ENCODE measurements at regions of chr13 and their contacts with region 1.

Region 1: GRCh38 chr13:44312898-44313551 is 60.6 kb upstream of the SERP2 start:
- DNase-seq: no peak
- ATAC-seq: no peak
- H3K4me3 ChIP-seq: no peak overlapping the region
- H3K27ac ChIP-seq: no peak overlapping the region
- H3K4me1 ChIP-seq: peaks cover 24 to 27% of the 10 kb centered on the region in 2 donors
- H3K27me3 ChIP-seq: no peaks in the 10 kb centered on the region
- CTCF ChIP-seq: no peak
- POLR2A ChIP-seq: no peak

Region 2: DNA sequence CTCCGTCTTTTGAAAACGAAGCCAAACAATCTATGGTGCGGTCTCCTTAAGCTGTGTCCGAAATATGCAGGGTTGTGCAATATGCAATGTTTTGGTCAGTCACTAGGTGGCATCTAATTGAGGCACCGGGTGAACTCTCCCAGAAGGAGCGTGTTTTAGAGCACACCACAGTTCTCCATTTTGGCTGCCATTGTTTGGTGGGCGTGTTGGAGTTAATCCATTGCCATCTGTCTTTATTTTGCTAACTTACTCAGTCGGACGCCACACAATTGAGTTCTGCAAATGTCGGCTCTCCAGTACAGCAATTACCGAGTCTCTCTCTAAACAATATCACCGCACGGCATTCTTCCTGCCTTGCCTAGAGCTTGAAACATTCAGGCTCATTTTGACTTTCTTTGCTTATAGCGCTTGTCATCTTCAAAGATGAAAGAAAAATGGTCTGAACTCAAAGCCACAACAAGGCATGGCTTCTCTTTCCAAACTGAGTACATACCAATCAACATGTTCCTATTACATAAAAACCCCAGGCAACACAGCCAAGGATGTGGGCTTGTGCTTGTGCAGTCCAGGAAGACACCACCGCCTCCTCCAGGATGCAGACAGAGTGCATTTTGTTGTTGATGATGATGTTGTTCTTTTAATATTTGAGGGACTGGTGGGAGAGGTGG is 121.4 kb before region 1 on chr13:
- in situ Hi-C with region 1: no loop called
- intact Hi-C with region 1: loop called (anchors 2 kb)
- DNase-seq: peak; percentile 57 to 68
- ATAC-seq: peak; percentile 98 to 99
- H3K4me3 ChIP-seq: peak overlapping the region; percentile 26 to 44 (median 32)
- H3K27ac ChIP-seq: peak overlapping the region; percentile 52 to 71 (median 56)
- H3K4me1 ChIP-seq: peaks cover 5 to 11% of the 10 kb centered on the region in 2 donors
- H3K27me3 ChIP-seq: no peaks in the 10 kb centered on the region
- CTCF ChIP-seq: peak; percentile 80 to 98 (median 89)
- POLR2A ChIP-seq: no peak

Region 3: GRCh38 chr13:44273644-44274451 is 39.2 kb before region 1 on chr13:
- in situ Hi-C with region 1: no loop called
- intact Hi-C with region 1: loop called (anchors 1 kb)
- DNase-seq: no peak
- ATAC-seq: no peak
- H3K4me3 ChIP-seq: peak overlapping the region in 2 of 4 donors; percentile 13 to 14
- H3K27ac ChIP-seq: peak overlapping the region; percentile 70 to 97 (median 93)
- H3K4me1 ChIP-seq: peaks cover 44 to 63% of the 10 kb centered on the region in 2 donors
- H3K27me3 ChIP-seq: no peaks in the 10 kb centered on the region
- CTCF ChIP-seq: no peak
- POLR2A ChIP-seq: no peak